Right ventricle myocardium inferior (tissue), 1 donor: ENCODE measurements at regions of chr22 and their contacts with region 1.

Region 1: DNA sequence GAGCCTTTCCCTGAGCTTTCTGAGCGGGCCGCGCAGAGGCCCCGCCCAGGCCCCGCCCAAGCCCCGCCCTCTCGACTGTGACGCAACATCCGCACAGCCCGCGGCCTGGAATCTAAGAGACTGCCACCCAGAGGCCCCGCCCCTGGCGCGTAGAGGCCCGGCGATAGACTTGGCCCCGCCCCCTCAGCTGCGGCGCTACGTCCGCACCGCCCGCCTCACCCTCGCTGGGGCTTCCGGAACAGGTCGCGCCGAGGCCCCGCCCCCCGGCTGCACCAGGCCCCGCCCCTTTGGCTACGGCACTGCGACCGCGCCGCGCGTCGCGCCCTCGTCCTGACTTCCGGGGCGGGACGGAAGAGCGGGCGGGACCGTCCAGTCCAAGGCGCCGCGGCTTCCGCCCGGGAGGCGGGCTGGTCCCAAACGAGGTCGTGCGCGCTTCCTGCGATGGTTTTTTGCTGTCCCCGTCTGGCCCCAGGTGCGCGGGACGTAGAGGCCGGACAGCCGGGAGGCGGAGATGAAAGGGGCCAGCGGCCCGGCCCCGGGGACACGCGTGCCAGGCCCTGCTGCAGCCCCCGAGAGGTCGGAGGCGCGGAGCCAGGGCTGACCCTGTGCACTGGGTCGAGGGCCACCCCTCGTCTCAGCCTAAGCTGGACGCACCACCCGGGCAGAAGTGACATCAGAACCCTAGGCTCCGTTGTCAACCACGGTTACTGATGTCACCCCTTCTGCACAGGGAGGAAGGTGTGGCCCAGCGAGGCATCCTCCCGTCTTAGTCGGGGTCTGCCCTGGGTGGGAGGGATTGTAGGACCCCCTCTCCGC is 59.0 kb upstream of the WNT7B start:
- DNase-seq: peak; percentile 100
- ATAC-seq: peak; percentile 98

Region 2: GRCh38 chr22:45889305-45890093 is 146.5 kb before region 1 on chr22:
- intact Hi-C with region 1: no loop called
- DNase-seq: peak; percentile 65
- ATAC-seq: no peak

Region 3: DNA sequence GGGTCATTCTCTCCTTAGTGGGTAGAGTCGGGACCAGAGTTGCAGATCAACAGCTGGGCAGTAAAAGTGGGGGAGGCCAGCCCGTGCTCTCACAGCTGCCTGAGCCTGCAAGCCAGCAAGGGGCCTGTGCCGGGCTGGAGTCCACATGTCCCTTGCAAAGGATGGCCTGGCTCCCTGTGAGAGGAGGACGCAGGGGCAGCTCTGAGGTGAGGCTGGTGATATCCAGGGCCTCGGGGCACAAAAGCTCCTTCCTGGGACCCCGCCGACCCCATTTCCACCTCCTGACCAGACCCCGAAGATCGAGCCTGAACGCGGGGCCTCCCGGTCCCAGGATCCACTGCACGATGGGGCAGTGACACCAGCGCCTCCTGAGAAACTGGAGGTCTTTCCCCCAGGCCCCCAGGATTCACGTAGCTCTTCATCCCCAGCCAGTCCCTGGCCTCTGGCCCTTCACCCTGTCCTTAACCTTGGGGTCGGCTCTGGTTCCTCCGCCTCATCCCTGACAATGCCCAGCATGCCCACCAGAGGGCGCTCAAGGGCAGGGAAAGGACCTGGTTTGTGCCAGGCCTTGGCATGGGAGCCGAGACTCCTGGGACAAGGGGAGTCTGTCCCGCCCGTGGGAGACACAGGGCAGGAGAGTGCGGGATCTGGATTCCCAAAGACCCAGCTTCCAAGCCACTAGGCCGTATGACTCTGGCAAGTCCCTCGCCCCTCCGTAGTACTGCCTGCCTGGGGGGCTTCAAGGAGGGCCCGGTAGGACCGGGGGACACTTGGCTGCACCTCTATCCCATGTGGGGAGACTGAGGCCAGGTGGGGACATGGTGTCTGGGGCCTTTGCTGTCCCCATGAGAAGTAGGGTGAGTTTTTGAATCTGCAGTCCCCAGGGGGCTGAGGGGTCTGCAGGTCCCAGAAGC is 41.2 kb before region 1 on chr22:
- intact Hi-C with region 1: loop called (anchors 5 kb)
- DNase-seq: peak; percentile 93
- ATAC-seq: peak; percentile 52

Region 4: GRCh38 chr22:46013460-46014416 is 22.2 kb before region 1 on chr22:
- intact Hi-C with region 1: loop called (anchors 2 kb)
- DNase-seq: peak; percentile 95
- ATAC-seq: peak; percentile 93

Region 5: GRCh38 chr22:46057762-46058420 is 21.9 kb after region 1 on chr22:
- intact Hi-C with region 1: loop called (anchors 2 kb)
- DNase-seq: no peak
- ATAC-seq: peak; percentile 24

Region 6: GRCh38 chr22:46071451-46072109 is 35.6 kb after region 1 on chr22:
- intact Hi-C with region 1: loop called (anchors 5 kb)
- DNase-seq: peak; percentile 96
- ATAC-seq: peak; percentile 43